BJ (cell line): ENCODE measurements at regions of chr3 and their contacts with region 1.

Region 1: GRCh38 chr3:135503760-135504686 is 461.5 kb upstream of the PPP2R3A start:
- DNase-seq: peak; percentile 9
- H3K4me3 ChIP-seq: no peak overlapping the region
- H3K27me3 ChIP-seq: no peaks in the 10 kb centered on the region; the same call in 1 of the 2 replicates
- CTCF ChIP-seq: peak; percentile 85

Region 2: GRCh38 chr3:135518628-135519027 is 14.6 kb after region 1 on chr3:
- CTCF ChIA-PET with region 1: interaction called, 21 read pairs
- POLR2A ChIA-PET with region 1: no interaction called
- DNase-seq: no peak
- H3K4me3 ChIP-seq: no peak overlapping the region
- H3K27me3 ChIP-seq: no peaks in the 10 kb centered on the region
- CTCF ChIP-seq: no peak